Sigmoid colon (tissue), 7 donors: ENCODE measurements at regions of chr7 and their contacts with region 1.

Region 1: DNA sequence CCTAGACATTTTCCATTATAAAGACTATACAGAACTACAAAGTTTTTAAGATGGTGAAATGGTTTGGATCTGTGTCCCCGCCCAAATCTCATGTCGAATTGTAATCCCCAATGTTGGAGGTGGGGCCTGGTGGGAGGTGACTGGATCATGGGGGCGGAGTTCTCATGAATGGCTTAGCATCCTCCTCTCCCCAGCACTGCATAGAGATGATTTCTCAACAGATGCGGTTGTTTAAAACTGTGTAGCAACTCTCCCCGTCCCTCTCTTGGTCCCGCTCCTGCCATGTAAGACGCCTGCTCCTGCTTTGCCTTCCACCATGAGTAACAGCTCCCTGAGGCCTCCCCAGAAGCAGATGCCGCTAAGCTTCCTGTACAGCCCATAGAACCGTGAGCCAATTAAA is 1.6 kb downstream of the FAM133B start:
- DNase-seq: no peak
- H3K4me3 ChIP-seq: peak overlapping the region in 2 of 4 donors; percentile 87 to 89
- H3K27ac ChIP-seq: peak overlapping the region in 1 of 4 donors; percentile 92
- H3K4me1 ChIP-seq: peaks cover 0 to 56% (median 39%) of the 10 kb centered on the region in 4 donors
- H3K27me3 ChIP-seq: no peaks in the 10 kb centered on the region
- CTCF ChIP-seq: no peak
- EP300 ChIP-seq: no peak
- POLR2A ChIP-seq: no peak

Region 2: DNA sequence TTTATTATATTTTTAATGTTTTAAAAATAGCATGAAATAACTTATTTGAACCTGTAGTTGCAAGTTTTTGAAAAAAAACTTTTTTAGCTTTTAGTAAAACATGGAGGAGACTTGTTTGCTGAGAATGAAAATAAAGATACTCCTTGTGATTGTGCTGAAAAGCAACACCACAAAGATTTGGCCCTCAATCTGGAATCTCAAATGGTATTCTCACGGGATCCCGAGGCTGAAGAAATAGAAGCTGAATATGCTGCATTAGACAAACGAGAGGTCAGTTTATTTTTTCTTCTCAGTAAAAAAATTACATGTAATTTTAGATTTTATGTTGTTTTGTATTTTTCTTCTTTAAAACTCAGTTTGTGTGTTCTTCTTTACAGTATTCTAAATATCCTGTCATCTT is 269.3 kb before region 1 on chr7:
- intact Hi-C with region 1: no loop called
- DNase-seq: no peak
- H3K4me3 ChIP-seq: no peak overlapping the region
- H3K27ac ChIP-seq: no peak overlapping the region
- H3K4me1 ChIP-seq: no peaks in the 10 kb centered on the region
- H3K27me3 ChIP-seq: no peaks in the 10 kb centered on the region
- CTCF ChIP-seq: no peak
- EP300 ChIP-seq: no peak
- POLR2A ChIP-seq: no peak

Region 3: DNA sequence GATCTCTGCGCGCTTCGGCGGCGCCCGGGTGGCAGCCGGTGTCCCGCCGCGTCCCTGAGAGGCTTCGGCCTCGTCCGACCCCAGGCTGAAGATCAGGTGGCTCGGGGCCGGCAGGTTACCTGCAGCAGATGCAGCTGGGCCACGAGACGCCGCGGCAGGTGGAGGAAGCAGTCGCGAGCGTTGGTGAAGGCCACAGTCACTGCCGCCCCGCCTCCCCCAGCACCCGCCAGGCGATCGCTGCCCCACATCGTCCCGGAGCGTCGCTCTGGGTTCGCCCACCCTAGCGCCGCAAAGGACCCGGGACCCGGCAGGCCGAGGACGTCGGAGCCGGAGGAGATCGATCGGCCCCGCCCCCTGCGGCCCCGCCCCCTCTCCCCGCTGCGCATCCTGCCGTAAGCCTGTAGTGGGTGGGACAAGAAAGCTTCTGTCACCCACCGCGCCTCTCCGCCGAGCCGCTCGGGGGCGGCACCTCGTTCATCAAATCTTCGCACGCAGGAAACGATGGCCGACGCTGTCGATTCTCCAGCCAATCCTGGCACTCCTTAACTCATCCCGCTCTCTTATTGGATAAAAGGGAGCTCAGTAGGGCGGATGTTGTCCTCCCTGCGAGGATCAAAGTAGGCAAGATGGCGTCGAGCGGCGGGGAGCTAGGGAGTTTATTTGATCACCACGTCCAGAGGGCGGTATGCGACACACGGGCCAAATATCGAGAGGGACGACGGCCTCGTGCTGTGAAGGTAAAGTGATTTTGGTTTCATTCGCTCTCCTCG is 60.2 kb before region 1 on chr7 and contains the starts of genes PEX1 and RBM48:
- intact Hi-C with region 1: loop called (anchors 2 kb)
- DNase-seq: peak; percentile 98
- H3K4me3 ChIP-seq: peak within 1 kb of the TSS; percentile 83 to 97 (median 95)
- H3K27ac ChIP-seq: peak within 1 kb of the TSS; percentile 86 to 90 (median 88)
- H3K4me1 ChIP-seq: peaks cover 0 to 22% (median 20%) of the 10 kb centered on the region in 4 donors
- H3K27me3 ChIP-seq: no peaks in the 10 kb centered on the region
- CTCF ChIP-seq: peak in 1 of 4 experiments; percentile 19
- EP300 ChIP-seq: no peak
- POLR2A ChIP-seq: no peak
- total RNA-seq, gene PEX1: 19.0 to 29.0 (median 24.4) TPM
- total RNA-seq, gene RBM48: 6.7 to 20.4 (median 14.5) TPM

Region 4: DNA sequence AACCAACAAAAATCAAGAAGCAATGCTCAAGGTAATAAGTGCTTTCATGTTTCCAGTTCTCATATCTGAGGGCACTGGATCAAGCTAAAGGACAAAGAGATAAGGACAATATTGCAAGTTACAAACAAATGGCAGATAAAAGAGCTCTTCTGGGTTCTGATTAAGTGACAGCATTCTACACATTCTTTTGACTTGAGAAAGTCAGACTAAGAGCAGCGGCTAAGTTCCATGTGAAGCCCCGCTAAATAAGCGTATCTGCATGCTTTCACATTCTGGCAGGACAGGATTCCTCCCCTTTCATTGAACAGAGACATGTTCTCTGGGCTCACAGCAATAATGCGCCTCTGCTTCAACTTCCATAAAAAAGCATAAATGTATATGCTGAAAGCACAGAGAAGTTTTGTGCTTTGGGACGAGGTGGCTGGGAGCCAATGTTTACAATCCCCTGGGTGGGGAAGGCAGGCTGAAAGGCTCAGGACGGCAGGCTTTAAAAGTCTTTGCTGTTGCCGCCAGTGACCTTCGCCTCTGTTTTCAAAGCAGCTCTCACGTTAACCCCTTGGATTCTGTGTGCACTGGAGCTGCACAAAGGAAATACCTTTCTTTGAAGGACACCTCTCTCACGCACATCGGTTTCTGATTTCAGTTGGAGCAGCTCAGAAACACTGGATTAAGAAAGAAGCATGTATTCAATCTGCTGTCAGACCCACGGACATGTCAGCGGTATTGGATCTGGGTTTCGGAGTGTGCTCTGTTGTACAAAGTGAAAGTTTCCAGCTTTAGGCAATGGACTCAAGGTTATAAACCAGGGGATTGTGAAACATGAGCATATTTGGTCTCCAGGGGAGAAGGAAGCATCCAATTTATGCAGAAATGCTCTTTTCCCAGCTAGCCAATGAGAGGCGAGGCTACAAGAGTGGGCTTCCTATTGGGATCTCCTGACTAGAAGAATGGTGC is 107.0 kb after region 1 on chr7:
- intact Hi-C with region 1: no loop called
- DNase-seq: no peak
- H3K4me3 ChIP-seq: peak overlapping the region; percentile 30 to 56 (median 51)
- H3K27ac ChIP-seq: peak overlapping the region; percentile 74 to 82 (median 80)
- H3K4me1 ChIP-seq: peaks cover 0 to 48% (median 27%) of the 10 kb centered on the region in 4 donors
- H3K27me3 ChIP-seq: no peaks in the 10 kb centered on the region
- CTCF ChIP-seq: no peak
- EP300 ChIP-seq: no peak
- POLR2A ChIP-seq: no peak